ENCODE measurements at regions of chr3 and their contacts with region 1.

Region 1: GRCh38 chr3:41660510-41660909 is 301.4 kb downstream of the ULK4 start:
- DNase-seq: no peak
- ATAC-seq: no peak
- H3K4me3 ChIP-seq: no peak overlapping the region
- H3K4me3 Mint-ChIP-seq: no peak overlapping the region
- H3K27ac ChIP-seq: no peak overlapping the region
- H3K27ac Mint-ChIP-seq: no peak overlapping the region
- H3K4me1 ChIP-seq: no peaks in the 10 kb centered on the region
- H3K4me1 Mint-ChIP-seq: no peaks in the 10 kb centered on the region
- H3K27me3 ChIP-seq: no peaks in the 10 kb centered on the region
- H3K27me3 Mint-ChIP-seq: no peaks in the 10 kb centered on the region
- CTCF ChIP-seq: no peak

Region 2: DNA sequence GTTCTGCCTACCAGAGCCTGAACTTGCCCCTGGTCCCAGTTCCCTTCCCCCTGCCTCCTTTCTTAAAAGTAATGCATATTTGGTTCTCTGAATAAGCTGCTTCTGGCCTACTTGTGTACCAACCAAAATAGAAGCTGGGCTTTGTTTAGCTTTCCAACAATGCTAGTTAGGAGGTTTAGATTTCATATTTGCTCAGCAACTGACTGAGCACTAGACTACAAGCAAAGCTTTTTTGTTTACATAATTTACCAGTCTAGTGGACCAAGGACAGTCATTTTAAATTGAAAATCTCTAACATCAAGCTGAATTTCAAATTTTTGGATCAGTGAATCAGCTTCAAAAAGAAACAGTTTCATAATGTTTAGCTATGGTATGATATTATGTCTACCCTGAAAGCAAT is 29.8 kb before region 1 on chr3:
- CTCF ChIA-PET with region 1: no interaction called
- POLR2A ChIA-PET with region 1: no interaction called
- intact Hi-C with region 1: no loop called
- DNase-seq: no peak
- ATAC-seq: no peak
- H3K4me3 ChIP-seq: no peak overlapping the region
- H3K4me3 Mint-ChIP-seq: no peak overlapping the region
- H3K27ac ChIP-seq: no peak overlapping the region
- H3K27ac Mint-ChIP-seq: no peak overlapping the region
- H3K4me1 ChIP-seq: no peaks in the 10 kb centered on the region
- H3K4me1 Mint-ChIP-seq: no peaks in the 10 kb centered on the region
- H3K27me3 ChIP-seq: no peaks in the 10 kb centered on the region
- H3K27me3 Mint-ChIP-seq: no peaks in the 10 kb centered on the region
- CTCF ChIP-seq: no peak

Region 3: GRCh38 chr3:41700155-41700554 is 39.6 kb after region 1 on chr3:
- CTCF ChIA-PET with region 1: no interaction called
- POLR2A ChIA-PET with region 1: no interaction called
- intact Hi-C with region 1: loop called in 1 of 2 experiments (anchors 1 kb)
- DNase-seq: no peak
- ATAC-seq: no peak
- H3K4me3 ChIP-seq: no peak overlapping the region
- H3K4me3 Mint-ChIP-seq: no peak overlapping the region
- H3K27ac ChIP-seq: no peak overlapping the region
- H3K27ac Mint-ChIP-seq: no peak overlapping the region
- H3K4me1 ChIP-seq: no peaks in the 10 kb centered on the region
- H3K4me1 Mint-ChIP-seq: no peaks in the 10 kb centered on the region
- H3K27me3 ChIP-seq: no peaks in the 10 kb centered on the region
- H3K27me3 Mint-ChIP-seq: no peaks in the 10 kb centered on the region
- CTCF ChIP-seq: no peak

Measured in CD8-positive, alpha-beta T cell (primary cell).